GM12878 (cell line): ENCODE measurements at regions of chr20 and their contacts with region 1.

Region 1: GRCh38 chr20:22684072-22684762 is 99.8 kb upstream of the FOXA2 start:
- DNase-seq: peak; percentile 15
- ATAC-seq: peak; percentile 96
- H3K4me3 ChIP-seq: no peak overlapping the region
- H3K27ac ChIP-seq: no peak overlapping the region
- H3K4me1 ChIP-seq: no peaks in the 10 kb centered on the region
- H3K27me3 ChIP-seq: no peaks in the 10 kb centered on the region
- CTCF ChIP-seq: peak; percentile 77 to 88 (median 78)
- EP300 ChIP-seq: no peak
- POLR2A ChIP-seq: no peak
- RAD21 ChIP-seq: peak; percentile 93

Region 2: GRCh38 chr20:22586645-22587310 is 97.4 kb before region 1 on chr20:
- CTCF ChIA-PET with region 1: interaction called, 5 read pairs
- POLR2A ChIA-PET with region 1: no interaction called
- RAD21 ChIA-PET with region 1: no interaction called
- SMC1A ChIA-PET with region 1: no interaction called
- in situ Hi-C with region 1: no loop called
- intact Hi-C with region 1: loop called (anchors 5 kb)
- DNase-seq: no peak
- ATAC-seq: peak; percentile 72
- H3K4me3 ChIP-seq: no peak overlapping the region
- H3K27ac ChIP-seq: no peak overlapping the region
- H3K4me1 ChIP-seq: no peaks in the 10 kb centered on the region
- H3K27me3 ChIP-seq: peaks cover 0 to 6% of the 10 kb centered on the region in 2 experiments; a peak in 3 of 4 replicates
- CTCF ChIP-seq: peak; percentile 50 to 54 (median 51)
- EP300 ChIP-seq: no peak
- POLR2A ChIP-seq: no peak
- RAD21 ChIP-seq: peak; percentile 59

Region 3: DNA sequence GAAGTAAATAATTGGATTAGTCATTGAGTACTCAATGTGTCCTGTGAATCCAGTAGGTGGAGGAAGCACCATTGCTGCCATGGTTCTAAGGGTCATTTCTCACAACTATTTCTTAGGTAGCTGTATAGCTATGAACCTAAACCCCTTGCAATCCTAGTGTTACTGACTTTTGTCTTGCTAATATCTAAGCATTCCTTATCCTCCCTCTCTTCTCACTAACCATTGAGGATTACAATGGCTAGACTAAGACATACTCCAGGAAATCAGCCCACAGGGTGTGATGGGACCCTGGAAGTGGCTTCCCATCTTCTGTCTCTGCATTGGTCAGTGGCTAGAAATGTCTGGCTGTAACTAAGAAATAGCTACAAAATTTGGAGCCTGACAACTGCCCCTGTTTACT is 72.6 kb before region 1 on chr20:
- CTCF ChIA-PET with region 1: no interaction called
- POLR2A ChIA-PET with region 1: no interaction called
- RAD21 ChIA-PET with region 1: no interaction called
- SMC1A ChIA-PET with region 1: no interaction called
- in situ Hi-C with region 1: no loop called
- intact Hi-C with region 1: no loop called
- DNase-seq: no peak
- ATAC-seq: no peak
- H3K4me3 ChIP-seq: no peak overlapping the region
- H3K27ac ChIP-seq: no peak overlapping the region
- H3K4me1 ChIP-seq: no peaks in the 10 kb centered on the region
- H3K27me3 ChIP-seq: no peaks in the 10 kb centered on the region
- CTCF ChIP-seq: no peak
- EP300 ChIP-seq: no peak
- POLR2A ChIP-seq: no peak
- RAD21 ChIP-seq: no peak

Region 4: DNA sequence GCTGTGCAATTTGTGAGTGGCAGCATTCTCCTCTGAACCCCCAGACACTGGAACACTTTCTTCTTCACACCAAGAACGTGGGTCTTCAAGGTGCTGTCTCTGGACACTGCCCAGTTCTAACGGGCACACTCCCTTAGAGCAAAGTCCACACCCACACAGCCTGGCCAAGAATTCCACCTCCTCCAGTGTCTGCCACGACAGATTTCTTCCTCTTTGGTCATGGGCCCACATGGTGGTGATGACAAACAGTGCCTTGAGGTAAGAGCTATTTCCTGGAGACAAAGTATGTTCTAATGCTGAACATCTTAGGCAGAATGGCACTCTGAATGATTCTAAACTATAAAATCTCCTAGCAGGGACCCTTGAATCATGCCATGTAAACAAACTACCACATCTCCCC is 325.4 kb after region 1 on chr20:
- CTCF ChIA-PET with region 1: no interaction called
- POLR2A ChIA-PET with region 1: no interaction called
- RAD21 ChIA-PET with region 1: no interaction called
- SMC1A ChIA-PET with region 1: no interaction called
- in situ Hi-C with region 1: no loop called
- intact Hi-C with region 1: no loop called
- DNase-seq: no peak
- ATAC-seq: no peak
- H3K4me3 ChIP-seq: no peak overlapping the region
- H3K27ac ChIP-seq: no peak overlapping the region
- H3K4me1 ChIP-seq: no peaks in the 10 kb centered on the region
- H3K27me3 ChIP-seq: no peaks in the 10 kb centered on the region
- CTCF ChIP-seq: no peak
- EP300 ChIP-seq: no peak
- POLR2A ChIP-seq: no peak
- RAD21 ChIP-seq: no peak